Activated CD4-positive, alpha-beta T cell treated with anti-CD3 and anti-CD28 coated beads for 36 hours (primary cell): ENCODE measurements at regions of chr17 and their contacts with region 1.

Region 1: GRCh38 chr17:33012522-33013033 is 20.9 kb downstream of the SPACA3 start:
- DNase-seq: no peak
- ATAC-seq: no peak
- H3K4me3 Mint-ChIP-seq: no peak overlapping the region
- H3K27ac Mint-ChIP-seq: no peak overlapping the region
- H3K4me1 Mint-ChIP-seq: no peaks in the 10 kb centered on the region
- H3K27me3 Mint-ChIP-seq: peaks cover 2% of the 10 kb centered on the region

Region 2: GRCh38 chr17:32997753-32998632 is 14.6 kb before region 1 on chr17:
- CTCF ChIA-PET with region 1: interaction called, 26 read pairs
- POLR2A ChIA-PET with region 1: no interaction called
- intact Hi-C with region 1: no loop called
- DNase-seq: peak; percentile 86
- ATAC-seq: peak; percentile 68
- H3K4me3 Mint-ChIP-seq: no peak overlapping the region
- H3K27ac Mint-ChIP-seq: no peak overlapping the region
- H3K4me1 Mint-ChIP-seq: peaks cover 4% of the 10 kb centered on the region
- H3K27me3 Mint-ChIP-seq: peaks cover 11% of the 10 kb centered on the region

Region 3: DNA sequence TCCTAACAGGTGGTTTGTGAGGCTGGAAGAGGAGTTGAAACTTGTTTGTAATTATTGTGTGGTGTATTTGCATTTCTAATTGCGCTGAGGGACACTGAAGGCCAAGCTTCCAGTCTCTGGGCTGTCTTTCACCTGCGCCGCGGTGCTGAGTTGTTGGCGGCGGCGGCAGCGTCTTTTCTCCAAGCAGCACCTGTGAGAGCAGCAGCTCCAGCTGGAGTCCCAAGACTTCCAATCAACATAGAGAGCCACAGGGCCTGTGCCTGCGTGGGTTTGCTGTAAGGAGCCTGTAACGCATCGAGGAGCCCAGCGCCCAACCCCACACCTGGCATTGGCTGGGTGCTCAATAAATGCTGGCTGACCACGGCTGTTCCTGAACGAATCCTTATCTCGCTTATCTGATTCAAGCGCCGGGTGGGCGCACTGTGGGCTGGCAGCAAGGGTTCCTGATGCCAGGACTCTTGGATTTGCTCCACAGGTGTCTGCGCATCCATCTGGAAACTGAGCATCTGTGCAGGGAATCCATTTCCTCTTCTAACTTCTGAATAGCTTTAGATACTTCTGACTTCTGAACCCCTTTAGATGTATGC is 142.4 kb after region 1 on chr17:
- CTCF ChIA-PET with region 1: no interaction called
- POLR2A ChIA-PET with region 1: no interaction called
- intact Hi-C with region 1: no loop called
- DNase-seq: no peak
- ATAC-seq: no peak
- H3K4me3 Mint-ChIP-seq: no peak overlapping the region
- H3K27ac Mint-ChIP-seq: no peak overlapping the region
- H3K4me1 Mint-ChIP-seq: no peaks in the 10 kb centered on the region
- H3K27me3 Mint-ChIP-seq: peaks cover 11% of the 10 kb centered on the region